ENCODE measurements at regions of chr11 and their contacts with region 1.

Region 1: GRCh38 chr11:67317205-67317887 is 14.0 kb downstream of the SSH3 start:
- DNase-seq: peak; percentile 99
- H3K4me3 Mint-ChIP-seq: peak overlapping the region; percentile 95
- H3K27ac Mint-ChIP-seq: peak overlapping the region; percentile 99
- H3K4me1 Mint-ChIP-seq: peaks cover 44% of the 10 kb centered on the region
- H3K27me3 Mint-ChIP-seq: peaks cover 3% of the 10 kb centered on the region

Region 2: DNA sequence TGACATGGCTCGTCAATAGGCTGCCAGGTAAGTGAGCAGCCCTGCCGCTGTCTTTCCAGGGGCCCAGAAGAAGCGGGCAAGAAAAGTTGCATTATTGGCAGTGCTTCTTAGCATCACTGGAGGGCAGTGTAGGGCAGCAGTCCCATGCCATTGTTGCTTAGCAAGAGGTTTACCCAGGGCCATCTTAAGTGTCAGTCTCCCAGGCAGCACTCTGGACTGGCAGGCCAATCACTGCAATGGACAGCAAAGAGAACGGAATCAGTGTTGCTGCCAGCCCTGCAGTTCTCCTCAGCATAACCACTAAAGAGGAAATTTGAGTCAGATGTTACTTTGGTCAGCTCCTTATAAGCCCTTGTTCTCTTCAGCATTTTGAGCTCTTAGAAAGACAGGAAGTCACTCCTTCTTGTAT is 64.5 kb before region 1 on chr11:
- CTCF ChIA-PET with region 1: interaction called, 15 read pairs
- POLR2A ChIA-PET with region 1: no interaction called
- DNase-seq: peak; percentile 48
- H3K4me3 Mint-ChIP-seq: no peak overlapping the region
- H3K27ac Mint-ChIP-seq: peak overlapping the region; percentile 72
- H3K4me1 Mint-ChIP-seq: peaks cover 47% of the 10 kb centered on the region
- H3K27me3 Mint-ChIP-seq: no peaks in the 10 kb centered on the region

Region 3: DNA sequence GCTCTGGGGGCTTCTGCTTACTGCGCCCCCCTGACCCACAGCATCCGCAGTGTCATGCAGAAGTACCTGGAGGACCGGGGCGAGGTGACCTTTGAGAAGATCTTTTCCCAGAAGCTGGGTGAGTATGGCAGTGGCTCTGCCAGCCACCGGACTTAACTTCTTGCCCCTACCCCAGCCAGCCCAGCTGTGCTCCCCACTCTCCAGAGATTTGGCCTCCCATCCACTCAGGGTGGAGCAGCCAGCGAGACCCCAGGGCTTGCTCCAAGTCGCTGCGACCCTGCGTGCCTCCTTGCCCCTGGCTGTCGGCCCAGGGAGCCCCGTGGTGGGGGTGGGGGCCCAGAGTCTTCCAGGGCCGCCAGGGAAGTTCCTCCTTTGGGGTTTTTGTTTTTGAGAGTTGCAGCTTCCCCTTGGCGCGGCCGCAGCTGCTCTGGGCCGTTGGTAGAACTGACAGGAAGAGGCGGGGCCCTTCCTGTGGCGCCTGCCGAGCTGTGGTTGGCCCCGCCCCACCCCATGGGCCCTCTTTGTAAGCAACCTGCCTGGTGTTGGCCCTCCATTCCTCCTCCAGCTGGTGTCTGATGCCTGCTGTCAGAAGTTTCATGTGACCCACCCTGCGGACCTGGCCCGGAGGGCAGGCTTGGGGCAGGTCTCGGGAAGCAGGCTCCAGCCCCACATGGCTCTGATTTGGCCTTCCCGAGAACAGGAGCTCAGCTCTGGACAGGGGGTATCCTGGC is 40.0 kb before region 1 on chr11:
- CTCF ChIA-PET with region 1: interaction called, 35 read pairs
- POLR2A ChIA-PET with region 1: interaction called, 5 read pairs
- DNase-seq: peak; percentile 95
- H3K4me3 Mint-ChIP-seq: peak overlapping the region; percentile 78
- H3K27ac Mint-ChIP-seq: peak overlapping the region; percentile 93
- H3K4me1 Mint-ChIP-seq: peaks cover 81% of the 10 kb centered on the region
- H3K27me3 Mint-ChIP-seq: no peaks in the 10 kb centered on the region

Region 4: GRCh38 chr11:67303132-67303834 is 14.1 kb before region 1 on chr11 and contains the start of gene SSH3:
- CTCF ChIA-PET with region 1: interaction called, 18 read pairs
- POLR2A ChIA-PET with region 1: no interaction called
- DNase-seq: no peak
- H3K4me3 Mint-ChIP-seq: peak within 1 kb of the TSS; percentile 43
- H3K27ac Mint-ChIP-seq: no peak within 1 kb of the TSS
- H3K4me1 Mint-ChIP-seq: peaks cover 13% of the 10 kb centered on the region
- H3K27me3 Mint-ChIP-seq: no peaks in the 10 kb centered on the region
- total RNA-seq, gene SSH3: 8.2 to 9.6 TPM

Region 5: DNA sequence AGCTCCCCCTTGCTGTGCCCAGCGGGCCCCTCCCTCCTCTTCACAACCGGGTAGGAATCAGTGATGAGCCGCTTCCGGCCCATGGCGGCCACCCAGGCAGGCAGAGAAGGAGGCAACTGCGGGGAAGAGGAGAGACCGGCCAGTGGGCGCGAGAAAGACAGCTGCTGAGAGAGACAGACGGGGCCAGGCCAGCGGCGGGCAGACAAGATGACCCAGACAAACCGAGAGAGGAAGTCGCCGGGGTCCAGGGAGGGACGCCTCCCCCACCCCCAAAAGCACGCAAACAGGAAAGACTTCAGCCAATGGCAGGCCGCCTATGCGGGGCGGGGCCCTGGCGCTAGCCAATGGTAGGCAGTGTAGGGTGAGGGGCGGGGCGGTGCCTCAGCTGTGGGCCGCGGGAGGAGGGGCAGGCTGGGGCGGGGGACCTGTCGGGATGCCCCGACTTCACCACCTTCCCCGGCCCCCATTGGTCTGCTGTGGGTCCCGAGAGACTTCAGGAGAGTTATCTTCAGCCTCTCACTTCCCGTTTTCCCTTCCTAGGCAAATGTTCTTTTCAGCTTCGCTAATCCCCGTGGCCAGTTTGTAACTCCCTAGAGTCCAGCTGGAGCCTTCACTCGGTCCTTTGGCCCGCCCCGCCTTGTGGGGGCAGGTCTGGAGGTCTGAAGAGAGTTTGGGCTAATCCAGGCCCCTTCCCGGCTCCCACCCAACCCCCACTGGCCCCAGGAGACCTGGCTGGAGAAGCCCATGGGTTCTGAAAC is 36.1 kb after region 1 on chr11 and contains the start of gene POLD4:
- CTCF ChIA-PET with region 1: interaction called, 19 read pairs
- POLR2A ChIA-PET with region 1: no interaction called
- DNase-seq: peak; percentile 97
- H3K4me3 Mint-ChIP-seq: peak within 1 kb of the TSS; percentile 89
- H3K27ac Mint-ChIP-seq: peak within 1 kb of the TSS; percentile 99
- H3K4me1 Mint-ChIP-seq: peaks cover 36% of the 10 kb centered on the region
- H3K27me3 Mint-ChIP-seq: peaks cover 8% of the 10 kb centered on the region
- total RNA-seq, gene POLD4: 52.7 to 53.7 TPM

Region 6: GRCh38 chr11:67691149-67691548 is 373.8 kb after region 1 on chr11:
- CTCF ChIA-PET with region 1: no interaction called
- POLR2A ChIA-PET with region 1: no interaction called
- DNase-seq: no peak
- H3K4me3 Mint-ChIP-seq: no peak overlapping the region
- H3K27ac Mint-ChIP-seq: no peak overlapping the region
- H3K4me1 Mint-ChIP-seq: no peaks in the 10 kb centered on the region
- H3K27me3 Mint-ChIP-seq: peaks cover 28% of the 10 kb centered on the region

Measured in activated CD4-positive, alpha-beta T cell treated with anti-CD3 and anti-CD28 coated beads, Interleukin-2, amount 10 ng/mL, durations not matched to agents 7 days and 5 days (primary cell).